ENCODE measurements at regions of chr1 and their contacts with region 1.

Region 1: GRCh38 chr1:94045465-94046056 is 75.4 kb downstream of the ABCA4 start:
- DNase-seq: peak; percentile 50
- H3K4me3 Mint-ChIP-seq: peak overlapping the region; percentile 41
- H3K27ac Mint-ChIP-seq: no peak overlapping the region
- H3K4me1 Mint-ChIP-seq: peaks cover 6% of the 10 kb centered on the region
- H3K27me3 Mint-ChIP-seq: peaks cover 13% of the 10 kb centered on the region

Region 2: DNA sequence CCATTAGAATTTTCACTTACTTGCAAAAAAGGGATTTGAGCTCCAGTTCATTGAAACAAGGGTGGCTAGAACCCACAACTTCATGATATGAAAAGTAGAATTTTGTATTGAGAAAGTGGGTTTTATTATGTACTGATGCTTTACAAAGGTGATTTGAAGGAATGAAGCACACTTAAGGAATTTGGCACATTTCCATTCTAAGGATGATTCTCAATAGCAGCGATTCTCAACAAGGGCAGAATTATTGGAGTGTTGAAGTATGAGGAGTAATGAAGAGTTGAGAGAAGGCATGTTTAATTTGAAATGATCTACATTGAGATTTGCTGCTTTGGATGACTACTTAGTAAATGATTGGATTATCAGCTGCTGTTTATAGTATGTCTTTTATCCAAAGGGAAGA is 543.0 kb before region 1 on chr1:
- CTCF ChIA-PET with region 1: no interaction called
- POLR2A ChIA-PET with region 1: no interaction called
- intact Hi-C with region 1: no loop called
- DNase-seq: no peak
- H3K4me3 Mint-ChIP-seq: no peak overlapping the region
- H3K27ac Mint-ChIP-seq: no peak overlapping the region
- H3K4me1 Mint-ChIP-seq: no peaks in the 10 kb centered on the region
- H3K27me3 Mint-ChIP-seq: peaks cover 3% of the 10 kb centered on the region

Region 3: DNA sequence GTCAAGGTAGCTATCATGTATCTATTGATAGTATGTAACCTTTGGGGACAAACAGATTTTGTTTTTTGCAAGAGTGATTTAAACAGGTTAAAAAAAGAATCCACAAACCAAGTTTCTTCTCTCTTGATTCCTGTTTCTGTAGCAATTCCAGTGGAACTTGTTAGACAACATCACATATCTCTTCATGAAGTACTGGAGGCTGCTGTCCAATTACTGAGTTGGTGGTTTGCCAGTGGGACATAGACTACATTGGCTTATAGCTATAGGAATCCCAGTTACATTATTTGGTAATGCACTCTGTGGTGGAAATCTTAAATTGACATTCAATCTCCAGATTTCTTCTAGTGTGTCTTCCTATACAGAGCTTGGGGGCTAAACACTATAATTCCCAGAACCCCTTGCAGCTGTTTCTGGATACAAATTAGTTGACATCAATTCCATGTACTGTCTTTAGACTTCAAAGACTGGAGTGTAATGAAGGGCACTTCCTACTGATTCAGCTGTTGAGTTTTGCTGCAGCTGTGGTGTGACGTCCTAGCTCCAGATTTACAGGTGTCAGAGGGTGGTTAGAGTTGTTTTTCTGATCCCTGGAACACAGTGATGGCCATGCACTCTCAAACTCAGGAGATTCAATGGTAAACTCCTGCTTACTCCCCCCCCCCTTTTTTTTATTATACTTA is 107.0 kb before region 1 on chr1:
- CTCF ChIA-PET with region 1: no interaction called
- POLR2A ChIA-PET with region 1: no interaction called
- intact Hi-C with region 1: no loop called
- DNase-seq: no peak
- H3K4me3 Mint-ChIP-seq: no peak overlapping the region
- H3K27ac Mint-ChIP-seq: no peak overlapping the region
- H3K4me1 Mint-ChIP-seq: no peaks in the 10 kb centered on the region
- H3K27me3 Mint-ChIP-seq: peaks cover 3% of the 10 kb centered on the region

Region 4: DNA sequence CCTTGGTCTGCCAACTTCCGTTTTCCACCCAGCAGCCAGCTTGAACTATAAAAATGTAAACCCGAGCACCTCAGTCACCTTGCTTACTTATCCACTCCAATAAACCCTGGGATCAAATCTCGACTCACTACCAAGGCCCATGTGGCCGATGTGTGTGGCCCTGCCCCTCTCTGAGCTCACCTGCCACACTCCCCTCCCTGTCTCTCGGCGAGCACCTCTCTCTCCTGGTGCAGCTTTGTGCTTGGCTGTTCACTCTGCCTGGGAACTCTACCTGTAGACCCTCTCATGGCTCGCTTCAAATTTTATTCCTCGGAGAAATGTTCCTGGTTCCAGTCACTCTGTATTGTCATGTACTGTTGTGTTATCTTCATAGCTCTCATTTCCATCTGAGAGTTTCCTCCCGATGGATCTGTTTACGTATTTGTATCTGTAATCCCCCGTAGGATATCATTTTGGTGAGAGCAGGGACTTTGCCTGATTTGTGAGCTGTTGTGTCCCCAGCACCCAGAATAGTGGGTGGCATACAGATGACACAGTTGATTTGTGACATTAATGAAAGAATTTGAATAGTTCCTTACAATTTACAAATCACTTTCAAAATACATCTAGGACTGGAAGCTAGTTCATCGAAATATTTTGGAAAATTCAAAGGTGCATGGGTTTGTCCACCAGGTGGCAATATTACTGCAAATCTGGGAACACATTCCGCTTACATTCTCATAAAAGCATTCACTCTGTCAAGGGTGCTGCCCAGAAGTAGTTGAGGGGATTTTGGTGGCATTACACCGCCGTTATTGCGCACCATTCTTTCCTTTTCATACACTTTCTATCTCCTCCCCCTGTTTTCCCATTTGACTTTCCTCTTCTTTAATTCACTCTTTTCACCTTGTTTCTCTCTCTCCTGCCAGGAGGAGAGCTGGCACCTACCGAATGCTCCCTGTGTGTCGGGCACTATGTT is 19.9 kb before region 1 on chr1:
- CTCF ChIA-PET with region 1: interaction called, 66 read pairs
- POLR2A ChIA-PET with region 1: no interaction called
- intact Hi-C with region 1: no loop called
- DNase-seq: no peak
- H3K4me3 Mint-ChIP-seq: no peak overlapping the region
- H3K27ac Mint-ChIP-seq: no peak overlapping the region
- H3K4me1 Mint-ChIP-seq: no peaks in the 10 kb centered on the region
- H3K27me3 Mint-ChIP-seq: peaks cover 2% of the 10 kb centered on the region

Region 5: GRCh38 chr1:94154989-94155388 is 109.4 kb after region 1 on chr1:
- CTCF ChIA-PET with region 1: no interaction called
- POLR2A ChIA-PET with region 1: no interaction called
- intact Hi-C with region 1: no loop called
- DNase-seq: no peak
- H3K4me3 Mint-ChIP-seq: no peak overlapping the region
- H3K27ac Mint-ChIP-seq: no peak overlapping the region
- H3K4me1 Mint-ChIP-seq: no peaks in the 10 kb centered on the region
- H3K27me3 Mint-ChIP-seq: no peaks in the 10 kb centered on the region

Region 6: DNA sequence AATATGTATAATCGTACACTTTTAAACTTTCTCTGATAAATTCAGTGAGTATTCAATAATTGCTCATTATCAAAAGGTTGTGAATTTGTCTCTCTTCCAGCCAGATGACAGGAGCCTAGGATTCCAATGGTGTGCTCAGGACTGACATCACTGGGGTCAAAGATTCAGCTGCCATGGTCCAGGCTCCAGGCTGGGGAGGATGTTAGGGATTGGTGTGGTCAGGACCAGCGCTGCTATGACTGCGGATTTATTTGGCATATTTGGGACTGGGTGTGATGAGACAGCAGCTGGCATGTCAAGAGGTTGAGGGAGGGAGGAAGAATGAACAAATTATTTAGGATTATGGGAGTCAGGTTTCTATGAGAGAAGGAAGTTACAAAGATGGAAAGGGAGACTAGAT is 123.6 kb after region 1 on chr1:
- CTCF ChIA-PET with region 1: no interaction called
- POLR2A ChIA-PET with region 1: no interaction called
- intact Hi-C with region 1: no loop called
- DNase-seq: no peak
- H3K4me3 Mint-ChIP-seq: no peak overlapping the region
- H3K27ac Mint-ChIP-seq: no peak overlapping the region
- H3K4me1 Mint-ChIP-seq: no peaks in the 10 kb centered on the region
- H3K27me3 Mint-ChIP-seq: peaks cover 14% of the 10 kb centered on the region

Measured in activated CD4-positive, alpha-beta memory T cell treated with anti-CD3 and anti-CD28 coated beads for 36 hours (primary cell).